PC-9 (cell line): ENCODE measurements at regions of chr5 and their contacts with region 1.

Region 1: DNA sequence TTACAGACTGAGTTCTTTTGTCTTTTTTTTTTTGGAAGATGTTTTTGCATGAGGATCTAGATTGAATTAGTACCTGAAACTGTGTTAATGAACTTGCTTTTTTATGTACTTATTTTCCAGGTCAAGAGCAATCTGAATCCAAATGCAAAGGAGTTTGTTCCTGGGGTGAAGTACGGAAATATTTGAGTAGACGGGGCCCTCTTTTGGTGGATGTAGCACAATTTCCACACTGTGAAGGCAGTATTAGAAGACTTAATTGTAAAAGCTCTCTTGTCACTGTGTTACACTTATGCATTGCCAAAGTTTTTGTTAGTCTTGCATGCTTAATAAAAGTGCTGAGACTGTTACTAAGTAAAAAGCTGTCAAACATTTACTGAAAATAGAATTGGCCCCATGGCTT is 14.5 kb downstream of the SLC23A1 start:
- DNase-seq: no peak
- H3K4me3 ChIP-seq: no peak overlapping the region
- H3K27ac ChIP-seq: no peak overlapping the region
- H3K4me1 ChIP-seq: peaks cover 20% of the 10 kb centered on the region
- H3K27me3 ChIP-seq: no peaks in the 10 kb centered on the region
- CTCF ChIP-seq: peak; percentile 23; the same call in 1 of the 2 replicates

Region 2: DNA sequence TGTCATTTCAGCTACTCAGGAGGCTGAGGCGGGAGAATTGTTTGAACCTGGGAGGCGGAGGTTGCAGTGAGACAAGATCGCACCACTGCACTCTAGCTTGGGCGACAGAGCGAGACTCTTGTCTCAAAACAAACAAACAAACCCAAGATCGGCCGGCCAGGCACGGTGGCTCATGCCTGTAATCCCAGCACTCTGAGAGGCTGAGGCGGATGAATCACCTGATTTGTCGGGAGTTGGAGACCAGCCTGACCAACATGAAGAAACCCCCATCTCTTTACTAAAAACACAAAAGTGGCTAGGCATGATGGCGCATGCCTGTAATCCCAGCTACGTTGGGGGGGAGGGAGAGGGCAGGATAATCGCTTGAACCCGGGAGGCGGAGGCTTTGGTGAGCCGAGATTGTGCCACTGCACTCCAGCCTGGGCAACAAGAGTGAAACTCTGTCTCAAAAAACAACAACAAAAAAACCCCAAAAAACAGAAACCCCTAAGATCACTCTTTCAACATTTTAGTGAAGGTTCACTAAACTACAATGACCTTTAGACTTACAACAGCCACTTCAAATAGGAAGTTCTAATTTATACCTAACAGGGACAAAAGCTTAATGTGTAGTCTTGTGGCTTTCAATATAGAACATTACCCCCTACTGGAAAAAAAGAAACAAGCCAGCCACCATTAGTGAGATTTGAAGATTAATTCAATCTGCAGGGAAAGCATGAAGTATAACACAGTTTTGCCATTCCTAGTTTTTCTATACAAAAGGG is 800.4 kb before region 1 on chr5:
- CTCF ChIA-PET with region 1: no interaction called
- POLR2A ChIA-PET with region 1: no interaction called
- intact Hi-C with region 1: loop called (anchors 5 kb)
- DNase-seq: no peak
- H3K4me3 ChIP-seq: no peak overlapping the region
- H3K27ac ChIP-seq: no peak overlapping the region
- H3K4me1 ChIP-seq: peaks cover 10% of the 10 kb centered on the region
- H3K27me3 ChIP-seq: no peaks in the 10 kb centered on the region
- CTCF ChIP-seq: no peak

Region 3: DNA sequence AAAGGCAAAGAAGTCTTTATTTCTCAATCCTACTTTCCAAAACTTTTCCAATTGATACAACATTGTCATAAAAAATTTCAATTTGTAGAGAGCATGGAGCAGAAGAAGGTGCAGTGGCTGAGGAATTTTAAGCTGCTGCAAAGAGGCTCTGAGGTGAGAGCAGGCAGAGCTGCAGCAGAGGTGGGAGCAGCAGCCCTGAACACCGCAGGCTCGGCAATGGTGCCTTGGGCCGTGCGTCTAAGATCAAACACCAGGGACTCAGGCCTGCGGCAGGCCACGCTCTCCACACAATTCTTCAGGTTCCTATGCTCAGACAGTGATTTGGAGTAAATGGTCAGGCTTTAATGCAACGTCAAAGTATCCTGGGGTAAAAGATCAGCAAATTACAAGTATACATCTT is 216.7 kb before region 1 on chr5:
- CTCF ChIA-PET with region 1: no interaction called
- POLR2A ChIA-PET with region 1: no interaction called
- intact Hi-C with region 1: no loop called
- DNase-seq: no peak
- H3K4me3 ChIP-seq: no peak overlapping the region
- H3K27ac ChIP-seq: no peak overlapping the region
- H3K4me1 ChIP-seq: peaks cover 30% of the 10 kb centered on the region
- H3K27me3 ChIP-seq: no peaks in the 10 kb centered on the region
- CTCF ChIP-seq: no peak